Left ventricle myocardium inferior (tissue), 1 donor: ENCODE measurements at regions of chrX and their contacts with region 1.

Region 1: GRCh38 chrX:72126539-72127140 is 5.1 kb downstream of the RTL5 start:
- DNase-seq: peak; percentile 85
- H3K4me3 ChIP-seq: no peak overlapping the region
- H3K27ac ChIP-seq: peak overlapping the region; percentile 82
- H3K4me1 ChIP-seq: peaks cover 64% of the 10 kb centered on the region
- H3K27me3 ChIP-seq: no peaks in the 10 kb centered on the region
- CTCF ChIP-seq: peak; percentile 83

Region 2: DNA sequence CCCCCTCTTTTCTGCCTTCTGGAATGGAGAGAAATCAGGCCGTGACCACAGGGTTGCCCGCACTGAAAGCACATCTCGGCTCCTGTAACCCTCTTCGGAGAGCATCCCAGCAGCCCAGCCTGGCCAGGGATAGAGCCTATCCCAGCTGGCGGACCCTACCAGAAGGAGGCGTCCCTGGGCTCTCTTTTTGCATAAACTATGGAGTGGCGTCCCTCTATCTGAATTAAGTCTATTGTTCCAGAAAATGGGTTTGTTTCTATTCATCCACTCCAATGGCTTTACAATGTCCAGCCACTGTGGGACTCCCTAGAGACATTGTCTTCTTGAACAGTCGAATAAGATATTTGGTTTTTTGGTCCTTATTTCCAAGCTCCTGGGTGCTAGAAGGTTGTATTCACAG is 216.7 kb before region 1 on chrX:
- intact Hi-C with region 1: loop called (anchors 10 kb)
- DNase-seq: no peak
- H3K4me3 ChIP-seq: peak overlapping the region; percentile 63
- H3K27ac ChIP-seq: no peak overlapping the region
- H3K4me1 ChIP-seq: peaks cover 8% of the 10 kb centered on the region
- H3K27me3 ChIP-seq: peaks cover 46% of the 10 kb centered on the region
- CTCF ChIP-seq: no peak

Region 3: DNA sequence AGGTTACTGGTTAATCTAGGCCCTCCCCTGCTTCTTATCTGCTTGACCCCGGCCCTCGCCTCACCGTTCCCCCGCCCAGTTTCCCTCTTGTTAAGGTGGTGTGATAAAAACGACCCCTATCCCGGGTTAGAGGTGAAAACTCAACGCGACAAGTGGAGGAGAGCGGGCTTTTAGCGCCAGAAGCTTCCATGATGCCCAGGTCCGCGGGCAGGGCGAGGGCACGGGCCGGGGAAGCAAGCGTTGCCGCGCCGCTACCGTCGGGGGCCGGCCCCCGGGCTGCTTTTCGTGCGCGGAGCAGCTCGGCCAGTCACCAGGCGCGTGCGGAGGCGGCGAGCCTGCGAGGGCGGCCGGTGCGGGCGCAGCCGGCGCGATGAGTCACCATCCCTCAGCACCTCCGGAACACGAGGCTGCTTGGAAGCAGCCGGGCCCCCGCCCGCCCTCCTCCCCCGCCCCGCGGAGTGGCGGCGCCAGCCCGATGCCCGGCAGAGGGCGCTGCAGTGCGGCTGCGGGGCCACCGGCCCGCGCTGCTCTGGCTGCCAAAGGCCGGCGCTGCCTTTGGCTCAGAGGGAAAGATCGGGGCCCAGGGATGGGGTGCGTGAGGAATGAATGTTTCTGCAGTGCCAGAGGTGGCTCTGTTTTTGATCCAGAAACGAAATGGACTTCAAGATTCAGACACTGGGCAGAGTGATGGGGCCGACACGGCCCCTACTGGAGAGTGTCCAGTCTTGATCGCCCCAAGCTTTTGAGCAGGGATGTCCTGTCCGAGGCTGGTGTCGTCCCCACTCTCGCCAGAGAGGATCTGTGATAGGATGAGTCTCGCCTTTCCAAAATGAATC is 108.1 kb before region 1 on chrX:
- intact Hi-C with region 1: loop called (anchors 10 kb)
- DNase-seq: peak; percentile 84
- H3K4me3 ChIP-seq: peak overlapping the region; percentile 54
- H3K27ac ChIP-seq: peak overlapping the region; percentile 59
- H3K4me1 ChIP-seq: peaks cover 12% of the 10 kb centered on the region
- H3K27me3 ChIP-seq: no peaks in the 10 kb centered on the region
- CTCF ChIP-seq: peak; percentile 81

Region 4: DNA sequence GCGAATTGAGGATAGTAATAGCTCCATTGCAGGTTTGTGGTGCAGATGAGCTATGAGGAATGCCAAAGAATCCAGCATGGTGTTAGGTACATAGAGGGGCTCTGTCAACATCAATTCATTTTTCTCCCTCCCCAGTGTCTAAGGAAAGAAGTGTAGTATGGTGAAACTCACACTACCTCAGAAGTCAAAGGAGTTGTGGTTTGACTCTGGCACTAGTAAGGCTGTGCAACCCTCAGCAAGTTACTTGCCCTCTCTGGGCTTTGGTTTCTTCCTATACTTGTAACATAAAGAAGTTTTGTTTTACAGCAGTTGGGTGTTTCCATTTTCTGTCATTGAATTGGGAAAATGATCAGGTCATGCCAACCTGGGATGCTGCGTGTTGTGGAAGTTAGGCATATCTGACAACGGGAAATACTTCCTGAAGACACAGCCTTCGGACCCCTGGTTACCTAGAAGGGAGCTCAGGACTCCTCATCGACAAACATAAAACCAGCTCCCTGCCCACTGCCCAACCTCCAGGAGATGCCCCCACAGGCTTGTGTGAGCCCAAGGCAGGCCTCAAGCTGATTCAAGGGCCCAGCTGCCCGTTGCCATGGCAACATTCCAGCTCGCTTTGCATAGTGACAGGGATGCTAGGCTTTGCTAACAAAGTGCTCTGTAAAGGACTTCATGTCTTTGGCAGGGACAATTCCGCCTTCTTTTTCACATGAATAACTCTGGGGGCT is 66.3 kb before region 1 on chrX:
- intact Hi-C with region 1: no loop called
- DNase-seq: no peak
- H3K4me3 ChIP-seq: no peak overlapping the region
- H3K27ac ChIP-seq: peak overlapping the region; percentile 12
- H3K4me1 ChIP-seq: peaks cover 14% of the 10 kb centered on the region
- H3K27me3 ChIP-seq: no peaks in the 10 kb centered on the region
- CTCF ChIP-seq: no peak